ENCODE measurements at regions of chr2 and their contacts with region 1.

Region 1: DNA sequence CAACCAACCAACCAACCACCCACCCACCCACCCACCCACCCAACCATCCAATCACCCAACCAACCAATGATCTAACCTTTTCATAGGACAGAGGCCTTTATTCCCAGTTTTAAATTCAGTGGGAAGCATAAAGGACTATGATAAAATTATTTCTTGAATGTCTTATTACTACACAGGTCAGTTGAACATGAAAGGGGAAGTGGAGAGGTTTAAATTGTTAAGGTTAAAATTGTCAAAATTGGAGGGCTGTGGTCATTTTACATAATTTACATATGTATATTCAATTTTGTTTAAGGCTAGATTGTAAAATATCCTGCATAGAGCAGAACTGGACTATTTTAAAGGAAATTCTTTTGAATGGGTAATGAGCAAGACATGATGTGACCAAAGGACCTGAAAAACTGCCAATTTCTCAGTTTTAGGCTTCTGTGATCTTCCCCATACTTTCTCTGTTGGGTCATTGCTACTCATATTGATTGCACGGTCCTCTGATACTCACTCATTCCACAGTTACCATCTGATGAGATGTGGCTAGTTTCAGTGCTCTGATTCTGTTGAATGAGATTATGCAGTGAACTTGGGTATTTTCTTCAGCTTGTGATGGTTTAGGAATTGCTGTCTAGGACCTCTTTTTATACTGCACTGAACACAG is 127.4 kb downstream of the PLCL1 start:
- DNase-seq: no peak
- ATAC-seq: peak; percentile 2; the same call in 1 of the 3 replicates
- H3K4me3 ChIP-seq: no peak overlapping the region
- H3K27ac ChIP-seq: peak overlapping the region; percentile 88
- H3K4me1 ChIP-seq: peaks cover under 1 to 54% of the 10 kb centered on the region in 2 experiments
- H3K27me3 ChIP-seq: no peaks in the 10 kb centered on the region
- CTCF ChIP-seq: no peak
- EP300 ChIP-seq: no peak
- POLR2A ChIP-seq: no peak
- RAD21 ChIP-seq: no peak

Region 2: DNA sequence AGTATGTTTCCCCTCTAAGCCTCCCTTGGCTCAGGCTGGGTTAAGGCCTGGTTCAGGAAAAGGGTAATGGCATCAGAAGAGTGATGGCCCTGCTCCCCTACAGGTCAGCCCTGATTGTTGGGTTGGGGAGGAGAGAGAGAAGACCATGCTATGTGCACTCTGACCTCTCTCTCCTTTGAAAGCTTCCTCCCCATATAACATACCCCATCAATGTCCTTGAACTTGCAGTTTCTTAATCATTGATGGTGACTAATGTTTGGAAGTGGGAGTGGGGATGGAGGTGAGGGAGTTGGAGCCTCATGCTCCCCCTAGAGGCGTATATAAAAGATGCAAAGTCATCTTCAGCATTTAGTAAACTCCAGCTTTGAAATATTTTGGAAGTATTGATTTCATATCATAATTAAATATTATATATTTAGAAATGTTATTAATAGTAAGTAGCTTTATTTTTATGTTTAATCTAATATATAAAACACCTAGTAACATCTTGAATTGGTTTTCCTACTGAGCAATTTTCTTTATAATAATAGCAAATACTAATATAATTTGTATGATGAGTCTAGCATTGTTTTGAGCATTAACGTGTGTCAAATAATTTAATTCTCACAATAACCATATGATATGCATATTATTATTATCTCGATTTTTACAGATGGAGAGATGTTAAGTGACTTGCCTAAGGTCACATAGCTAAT is 118.5 kb before region 1 on chr2:
- CTCF ChIA-PET with region 1: no interaction called
- POLR2A ChIA-PET with region 1: no interaction called
- in situ Hi-C with region 1: loop called (anchors 10 kb)
- intact Hi-C with region 1: no loop called
- DNase-seq: peak; percentile 51 to 69 (median 62)
- ATAC-seq: peak; percentile 77
- H3K4me3 ChIP-seq: no peak overlapping the region
- H3K27ac ChIP-seq: peak overlapping the region; percentile 50; the same call in 2 of the 3 replicates
- H3K4me1 ChIP-seq: peaks cover 0 to 17% of the 10 kb centered on the region in 2 experiments; a peak in 3 of 5 replicates
- H3K27me3 ChIP-seq: no peaks in the 10 kb centered on the region
- CTCF ChIP-seq: peak; percentile 46 to 71 (median 59)
- EP300 ChIP-seq: peak; percentile 52
- POLR2A ChIP-seq: no peak
- RAD21 ChIP-seq: 0 out of 4 replicates have a peak, but pooled peaks of 1 of the 2 experiments have one; percentile 15

Region 3: GRCh38 chr2:197851451-197851850 is 80.3 kb before region 1 on chr2:
- CTCF ChIA-PET with region 1: no interaction called
- POLR2A ChIA-PET with region 1: interaction called, 3 read pairs
- in situ Hi-C with region 1: no loop called
- intact Hi-C with region 1: loop called (anchors 2 kb)
- DNase-seq: peak; percentile 31 to 72 (median 54)
- ATAC-seq: peak; percentile 89
- H3K4me3 ChIP-seq: no peak overlapping the region
- H3K27ac ChIP-seq: peak overlapping the region; percentile 20; the same call in 1 of the 3 replicates
- H3K4me1 ChIP-seq: peaks cover 0 to 30% of the 10 kb centered on the region in 2 experiments; a peak in 3 of 5 replicates
- H3K27me3 ChIP-seq: no peaks in the 10 kb centered on the region
- CTCF ChIP-seq: peak; percentile 43 to 64 (median 51)
- EP300 ChIP-seq: peak; percentile 40; the same call in 1 of the 2 replicates
- POLR2A ChIP-seq: no peak
- RAD21 ChIP-seq: peak; percentile 56 to 85

Region 4: GRCh38 chr2:197889041-197889440 is 42.7 kb before region 1 on chr2:
- CTCF ChIA-PET with region 1: no interaction called
- POLR2A ChIA-PET with region 1: interaction called, 3 read pairs
- in situ Hi-C with region 1: no loop called
- intact Hi-C with region 1: loop called (anchors 2 kb)
- DNase-seq: peak in 3 of 4 experiments; percentile 21 to 77 (median 50)
- ATAC-seq: peak; percentile 79
- H3K4me3 ChIP-seq: no peak overlapping the region
- H3K27ac ChIP-seq: peak overlapping the region; percentile 84
- H3K4me1 ChIP-seq: peaks cover 4 to 37% of the 10 kb centered on the region in 2 experiments; a peak in 3 of 5 replicates
- H3K27me3 ChIP-seq: no peaks in the 10 kb centered on the region
- CTCF ChIP-seq: no peak
- EP300 ChIP-seq: peak; percentile 49; the same call in 1 of the 2 replicates
- POLR2A ChIP-seq: 0 out of 2 replicates have a peak, but pooled peaks have one; percentile 29
- RAD21 ChIP-seq: no peak

Region 5: DNA sequence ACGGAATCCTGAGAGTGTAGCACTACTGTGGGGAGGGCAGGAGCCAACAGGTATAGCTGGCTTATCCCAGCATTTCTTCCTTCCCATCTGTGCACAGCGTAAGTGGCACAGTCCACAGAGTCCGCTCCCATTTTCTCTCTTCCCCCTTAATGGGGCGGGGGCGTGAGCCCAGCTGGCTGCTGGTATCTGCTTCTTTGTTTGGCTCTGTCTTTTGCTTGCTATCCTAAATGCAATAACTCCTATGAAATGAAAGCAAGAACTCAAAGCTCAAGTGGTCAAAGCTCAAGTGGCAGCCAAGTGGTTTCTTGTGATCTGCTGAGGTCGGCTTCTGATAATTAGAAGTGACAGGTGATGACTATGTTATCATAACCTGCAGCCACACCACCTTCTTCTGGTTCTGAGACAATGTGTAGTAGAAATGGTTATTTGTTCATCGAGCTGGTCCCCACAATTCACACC is 65.3 kb after region 1 on chr2:
- CTCF ChIA-PET with region 1: no interaction called
- POLR2A ChIA-PET with region 1: no interaction called
- in situ Hi-C with region 1: no loop called
- intact Hi-C with region 1: loop called (anchors 5 kb)
- DNase-seq: peak in 2 of 4 experiments; percentile 16 to 65
- ATAC-seq: peak; percentile 43
- H3K4me3 ChIP-seq: no peak overlapping the region
- H3K27ac ChIP-seq: peak overlapping the region; percentile 67
- H3K4me1 ChIP-seq: peaks cover 22 to 56% of the 10 kb centered on the region in 2 experiments
- H3K27me3 ChIP-seq: no peaks in the 10 kb centered on the region
- CTCF ChIP-seq: no peak
- EP300 ChIP-seq: no peak
- POLR2A ChIP-seq: no peak
- RAD21 ChIP-seq: no peak

Region 6: DNA sequence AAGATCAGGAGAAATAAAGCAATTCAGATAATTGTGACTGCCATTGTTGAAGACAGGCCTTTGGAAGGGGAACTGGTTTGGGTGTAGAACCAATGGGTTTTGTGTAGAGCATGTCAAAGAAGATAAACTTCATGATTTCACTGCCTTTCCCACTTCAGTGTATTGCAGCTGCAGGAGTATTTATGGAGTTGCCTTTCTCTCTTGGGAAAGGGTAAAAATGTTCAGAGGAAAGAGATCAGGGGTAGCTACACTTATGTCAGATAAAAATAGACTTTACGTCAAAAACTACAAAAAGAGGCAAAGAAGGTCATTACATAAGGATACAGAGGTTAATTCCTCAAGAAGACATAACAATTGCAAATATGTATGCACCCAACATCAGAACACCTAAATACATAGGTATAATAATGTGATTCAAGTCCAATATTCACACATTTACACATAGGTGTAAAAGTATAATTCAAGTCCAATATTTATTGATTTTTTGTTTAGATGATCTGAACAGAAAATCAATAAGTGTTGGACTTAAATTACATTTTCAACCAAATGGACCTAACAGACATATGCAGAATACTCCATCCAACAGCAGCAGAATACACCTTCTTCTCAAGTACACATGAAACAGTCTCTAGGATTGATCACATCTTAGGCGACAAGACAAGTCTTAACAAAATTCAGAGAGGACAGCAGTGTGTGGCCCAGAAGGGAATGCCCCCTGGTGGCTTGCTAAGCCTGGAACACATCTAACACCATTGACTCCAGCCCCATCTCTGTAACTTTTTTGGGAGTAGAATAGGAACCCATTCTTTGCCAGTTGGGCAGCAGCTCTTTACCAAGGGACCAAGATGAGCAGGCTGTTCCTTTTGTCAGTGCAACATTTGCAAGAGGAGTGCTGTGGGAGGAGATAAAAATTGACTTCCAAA is 122.2 kb after region 1 on chr2:
- CTCF ChIA-PET with region 1: no interaction called
- POLR2A ChIA-PET with region 1: interaction called, 3 read pairs
- in situ Hi-C with region 1: no loop called
- intact Hi-C with region 1: loop called (anchors 5 kb)
- DNase-seq: peak; percentile 21 to 72 (median 48)
- ATAC-seq: peak; percentile 96
- H3K4me3 ChIP-seq: no peak overlapping the region
- H3K27ac ChIP-seq: no peak overlapping the region
- H3K4me1 ChIP-seq: peaks cover 3 to 8% of the 10 kb centered on the region in 2 experiments; a peak in 4 of 5 replicates
- H3K27me3 ChIP-seq: no peaks in the 10 kb centered on the region
- CTCF ChIP-seq: peak; percentile 59 to 66 (median 61)
- EP300 ChIP-seq: no peak
- POLR2A ChIP-seq: no peak
- RAD21 ChIP-seq: peak; percentile 62 to 76

Region 7: DNA sequence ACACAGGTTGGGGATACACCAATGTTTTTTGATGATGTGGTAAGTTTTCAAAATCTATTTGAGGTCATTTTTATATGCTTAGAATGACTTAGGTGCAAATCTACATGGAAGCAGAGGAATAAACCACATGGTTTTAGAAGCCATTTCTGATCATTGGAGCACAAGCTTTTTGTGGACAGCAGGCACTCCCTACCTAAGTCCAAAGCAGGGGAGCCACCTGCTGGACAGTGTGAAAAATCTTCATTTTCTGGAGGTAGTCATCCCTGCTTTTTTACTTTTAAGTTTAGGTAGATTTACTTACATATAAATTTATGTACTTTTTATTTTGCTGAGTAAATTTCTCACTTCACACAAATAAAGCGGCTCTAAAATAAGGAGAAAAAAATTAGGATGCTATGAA is 195.8 kb after region 1 on chr2:
- CTCF ChIA-PET with region 1: no interaction called
- POLR2A ChIA-PET with region 1: no interaction called
- in situ Hi-C with region 1: no loop called
- intact Hi-C with region 1: loop called (anchors 5 kb)
- DNase-seq: peak; percentile 28 to 72 (median 46)
- ATAC-seq: peak; percentile 87
- H3K4me3 ChIP-seq: no peak overlapping the region
- H3K27ac ChIP-seq: no peak overlapping the region
- H3K4me1 ChIP-seq: peaks cover 0 to 3% of the 10 kb centered on the region in 2 experiments; a peak in 2 of 5 replicates
- H3K27me3 ChIP-seq: no peaks in the 10 kb centered on the region
- CTCF ChIP-seq: peak; percentile 52 to 60 (median 53)
- EP300 ChIP-seq: no peak
- POLR2A ChIP-seq: no peak
- RAD21 ChIP-seq: peak; percentile 42 to 75

Measured in K562 (cell line).